ENCODE measurements at regions of chr12 and their contacts with region 1.

Region 1: GRCh38 chr12:57452937-57453509 is 2.1 kb upstream of the INHBE start:
- DNase-seq: peak; percentile 88
- ATAC-seq: peak; percentile 87

Region 2: DNA sequence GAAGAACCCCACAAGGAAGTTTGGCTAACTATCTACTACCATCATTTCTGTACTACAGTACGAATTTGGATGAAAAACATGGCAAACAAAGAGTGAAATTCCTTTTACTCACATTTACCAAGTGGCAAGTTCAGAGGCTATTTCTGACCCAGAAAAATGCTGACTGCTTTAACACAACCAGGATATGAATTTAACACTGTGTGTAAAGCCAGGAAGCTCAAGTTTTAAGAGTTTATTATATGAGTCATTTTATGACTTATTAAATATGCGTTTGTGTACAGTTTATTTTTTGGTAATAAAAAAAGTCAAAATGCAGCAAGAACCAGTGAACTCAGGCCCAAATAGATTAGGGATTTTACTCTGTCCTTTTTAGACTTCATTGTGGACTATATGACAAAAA is 143.6 kb before region 1 on chr12:
- intact Hi-C with region 1: loop called (anchors 5 kb)
- DNase-seq: no peak
- ATAC-seq: no peak